Heart left ventricle (tissue), 16 donors: ENCODE measurements at regions of chr5 and their contacts with region 1.

Region 1: GRCh38 chr5:30561771-30562170 is 631.7 kb upstream of the CDH6 start:
- DNase-seq: no peak
- ATAC-seq: no peak
- H3K4me3 ChIP-seq: no peak overlapping the region
- H3K27ac ChIP-seq: no peak overlapping the region
- H3K4me1 ChIP-seq: no peaks in the 10 kb centered on the region
- H3K27me3 ChIP-seq: no peaks in the 10 kb centered on the region
- CTCF ChIP-seq: no peak
- POLR2A ChIP-seq: no peak

Region 2: DNA sequence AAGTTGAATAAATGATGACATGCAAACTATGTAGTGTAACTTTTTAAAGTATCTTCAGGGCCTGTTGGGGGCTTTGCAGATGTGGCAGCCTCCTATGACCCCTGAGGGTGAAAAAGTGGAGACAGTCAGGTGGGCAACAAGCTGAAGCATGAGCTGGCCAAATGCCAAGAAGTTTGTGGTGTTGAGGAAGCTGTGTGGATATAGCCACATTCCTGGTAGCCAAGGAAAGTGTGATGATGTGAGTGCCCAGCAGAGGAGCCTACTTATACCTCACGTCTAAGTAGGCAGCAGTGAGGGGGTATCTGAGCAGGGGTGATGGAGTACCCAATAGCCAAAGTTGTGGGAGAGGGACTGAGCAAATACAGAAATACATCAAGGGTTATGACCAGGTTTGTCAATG is 10.5 kb after region 1 on chr5:
- intact Hi-C with region 1: loop called in 1 of 10 experiments (anchors 1 kb)
- DNase-seq: no peak
- ATAC-seq: no peak
- H3K4me3 ChIP-seq: no peak overlapping the region
- H3K27ac ChIP-seq: no peak overlapping the region
- H3K4me1 ChIP-seq: no peaks in the 10 kb centered on the region
- H3K27me3 ChIP-seq: no peaks in the 10 kb centered on the region
- CTCF ChIP-seq: no peak
- POLR2A ChIP-seq: no peak